Activated T-helper 1 cell treated with anti-CD3 and anti-CD28 coated beads, Interleukin-12 subunit alpha, Interleukin-12 subunit beta, Interleukin-2, Interleukin-4 antibody, amounts not matched to agents 30 ng/mL and 10 ng/mL and 1 ng/mL, durations not matched to agents 14 hours and 24 hours and 36 hours (primary cell): ENCODE measurements at regions of chr20 and their contacts with region 1.

Region 1: DNA sequence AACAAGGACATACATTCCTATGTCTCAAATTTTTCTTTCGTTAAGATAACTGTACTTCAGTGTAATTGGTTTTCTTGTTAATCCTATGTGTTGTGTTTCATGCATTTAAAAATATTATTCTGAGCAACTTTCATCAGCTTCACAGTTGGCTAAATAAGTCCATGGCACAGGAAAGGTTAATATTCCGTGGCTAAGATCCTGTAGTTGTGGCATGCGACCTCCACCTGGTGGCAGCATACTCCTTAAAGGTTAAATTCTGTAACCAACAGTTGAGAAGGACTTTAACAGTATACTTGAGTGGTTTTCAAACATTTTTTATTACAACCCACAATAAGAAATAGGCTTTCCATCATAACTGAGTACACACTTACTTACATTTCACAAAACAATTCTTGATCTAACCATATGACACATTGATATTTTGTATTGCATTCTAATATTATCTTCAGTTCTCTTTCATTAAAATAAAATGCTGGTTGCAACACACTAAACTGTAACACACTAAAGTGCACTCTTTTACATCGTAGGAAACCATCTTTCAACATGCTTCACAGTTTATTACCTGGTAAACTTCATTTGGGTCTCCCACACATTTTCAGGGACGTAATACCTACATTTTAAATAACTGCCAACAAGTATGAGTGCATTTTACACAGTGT is 118.3 kb downstream of the SLX4IP start:
- DNase-seq: peak; percentile 19
- H3K4me3 Mint-ChIP-seq: no peak overlapping the region
- H3K27ac Mint-ChIP-seq: no peak overlapping the region
- H3K4me1 Mint-ChIP-seq: peaks cover 39% of the 10 kb centered on the region
- H3K27me3 Mint-ChIP-seq: no peaks in the 10 kb centered on the region

Region 2: DNA sequence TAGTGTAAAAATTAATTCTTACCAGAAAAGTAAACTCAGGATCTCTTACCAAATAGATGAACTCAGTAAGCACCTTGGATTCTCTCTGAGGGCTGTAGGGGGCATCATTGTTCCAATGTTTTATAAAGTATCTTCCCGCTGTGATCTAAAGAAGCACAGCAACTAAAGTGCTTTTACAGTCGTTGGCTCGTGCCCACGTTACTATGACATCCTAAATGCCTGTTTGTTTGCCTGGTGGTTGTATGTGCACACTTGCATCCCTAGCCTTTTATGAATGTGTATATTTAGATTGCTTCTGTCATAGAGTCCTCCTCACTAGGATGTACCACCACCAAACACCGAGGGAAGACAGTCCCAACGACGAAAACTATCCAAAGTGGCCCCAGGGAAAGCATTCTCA is 83.9 kb before region 1 on chr20:
- intact Hi-C with region 1: loop called (anchors 5 kb)
- DNase-seq: peak; percentile 2
- H3K4me3 Mint-ChIP-seq: no peak overlapping the region
- H3K27ac Mint-ChIP-seq: no peak overlapping the region
- H3K4me1 Mint-ChIP-seq: peaks cover 19% of the 10 kb centered on the region
- H3K27me3 Mint-ChIP-seq: no peaks in the 10 kb centered on the region

Region 3: GRCh38 chr20:10832141-10832540 is 278.7 kb after region 1 on chr20:
- intact Hi-C with region 1: no loop called
- DNase-seq: no peak
- H3K4me3 Mint-ChIP-seq: no peak overlapping the region
- H3K27ac Mint-ChIP-seq: no peak overlapping the region
- H3K4me1 Mint-ChIP-seq: no peaks in the 10 kb centered on the region
- H3K27me3 Mint-ChIP-seq: no peaks in the 10 kb centered on the region

Region 4: GRCh38 chr20:11047559-11047958 is 494.1 kb after region 1 on chr20:
- intact Hi-C with region 1: no loop called
- DNase-seq: no peak
- H3K4me3 Mint-ChIP-seq: no peak overlapping the region
- H3K27ac Mint-ChIP-seq: no peak overlapping the region
- H3K4me1 Mint-ChIP-seq: no peaks in the 10 kb centered on the region
- H3K27me3 Mint-ChIP-seq: no peaks in the 10 kb centered on the region

Region 5: DNA sequence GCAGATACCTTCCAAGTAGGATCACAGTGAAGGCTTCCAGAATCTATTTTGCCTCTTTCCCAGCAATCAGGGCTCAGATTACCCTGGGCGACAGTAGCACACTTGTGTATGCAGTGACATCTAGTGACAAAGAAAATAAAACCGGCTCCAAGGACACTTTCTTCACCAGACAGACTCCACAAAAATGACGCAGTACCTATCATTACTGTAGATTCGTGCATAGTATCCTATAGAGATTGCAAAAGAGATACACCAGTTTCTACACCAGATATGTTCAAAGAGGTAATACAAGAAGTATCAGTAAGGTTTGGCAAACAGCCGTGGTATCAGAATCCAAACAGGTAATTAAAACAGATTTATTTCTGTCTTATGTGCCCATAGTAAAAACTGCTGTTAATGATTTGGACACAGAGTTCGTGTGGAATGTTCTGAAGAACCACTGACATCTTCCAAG is 720.7 kb after region 1 on chr20:
- intact Hi-C with region 1: loop called (anchors 5 kb)
- DNase-seq: no peak
- H3K4me3 Mint-ChIP-seq: no peak overlapping the region
- H3K27ac Mint-ChIP-seq: no peak overlapping the region
- H3K4me1 Mint-ChIP-seq: no peaks in the 10 kb centered on the region
- H3K27me3 Mint-ChIP-seq: no peaks in the 10 kb centered on the region

Region 6: GRCh38 chr20:11544029-11544678 is 990.7 kb after region 1 on chr20:
- intact Hi-C with region 1: loop called (anchors 1 kb)
- DNase-seq: peak; percentile 6
- H3K4me3 Mint-ChIP-seq: no peak overlapping the region
- H3K27ac Mint-ChIP-seq: no peak overlapping the region
- H3K4me1 Mint-ChIP-seq: no peaks in the 10 kb centered on the region
- H3K27me3 Mint-ChIP-seq: no peaks in the 10 kb centered on the region